OCI-LY7 (cell line): ENCODE measurements at regions of chr7 and their contacts with region 1.

Region 1: GRCh38 chr7:121366852-121367431 is 29.2 kb downstream of the FAM3C start:
- DNase-seq: peak; percentile 46
- H3K4me3 ChIP-seq: no peak overlapping the region
- H3K27ac ChIP-seq: no peak overlapping the region
- H3K4me1 ChIP-seq: peaks cover 5% of the 10 kb centered on the region
- CTCF ChIP-seq: peak; percentile 96

Region 2: DNA sequence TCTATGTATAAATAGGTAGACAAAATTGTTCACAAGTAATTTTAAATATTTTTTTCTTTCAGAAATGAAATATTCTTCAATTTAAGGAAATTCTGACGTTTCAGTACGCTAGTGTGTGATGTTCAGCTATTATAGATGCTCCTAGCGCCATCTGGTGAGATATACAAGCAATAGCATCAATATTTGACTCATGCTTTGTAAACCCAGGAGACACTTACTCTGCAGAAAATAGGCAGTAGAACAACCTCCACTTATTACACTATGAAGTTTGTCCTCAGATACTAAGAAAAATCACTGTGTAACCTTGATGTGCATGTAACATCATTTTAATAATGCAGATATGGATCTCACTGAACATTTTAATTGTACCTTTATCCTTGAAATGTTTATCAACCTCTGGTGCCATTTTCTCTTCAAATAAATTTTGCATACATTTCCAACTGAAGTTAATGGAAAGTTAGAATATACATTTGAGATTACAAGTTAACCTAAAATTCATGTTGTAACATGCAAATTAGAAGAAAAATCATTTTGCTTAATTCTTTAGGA is 180.7 kb after region 1 on chr7:
- CTCF ChIA-PET with region 1: no interaction called
- POLR2A ChIA-PET with region 1: interaction called, 3 read pairs
- intact Hi-C with region 1: loop called (anchors 1 kb)
- DNase-seq: peak; percentile 75
- H3K4me3 ChIP-seq: no peak overlapping the region
- H3K27ac ChIP-seq: no peak overlapping the region
- H3K4me1 ChIP-seq: no peaks in the 10 kb centered on the region
- CTCF ChIP-seq: peak; percentile 91

Region 3: DNA sequence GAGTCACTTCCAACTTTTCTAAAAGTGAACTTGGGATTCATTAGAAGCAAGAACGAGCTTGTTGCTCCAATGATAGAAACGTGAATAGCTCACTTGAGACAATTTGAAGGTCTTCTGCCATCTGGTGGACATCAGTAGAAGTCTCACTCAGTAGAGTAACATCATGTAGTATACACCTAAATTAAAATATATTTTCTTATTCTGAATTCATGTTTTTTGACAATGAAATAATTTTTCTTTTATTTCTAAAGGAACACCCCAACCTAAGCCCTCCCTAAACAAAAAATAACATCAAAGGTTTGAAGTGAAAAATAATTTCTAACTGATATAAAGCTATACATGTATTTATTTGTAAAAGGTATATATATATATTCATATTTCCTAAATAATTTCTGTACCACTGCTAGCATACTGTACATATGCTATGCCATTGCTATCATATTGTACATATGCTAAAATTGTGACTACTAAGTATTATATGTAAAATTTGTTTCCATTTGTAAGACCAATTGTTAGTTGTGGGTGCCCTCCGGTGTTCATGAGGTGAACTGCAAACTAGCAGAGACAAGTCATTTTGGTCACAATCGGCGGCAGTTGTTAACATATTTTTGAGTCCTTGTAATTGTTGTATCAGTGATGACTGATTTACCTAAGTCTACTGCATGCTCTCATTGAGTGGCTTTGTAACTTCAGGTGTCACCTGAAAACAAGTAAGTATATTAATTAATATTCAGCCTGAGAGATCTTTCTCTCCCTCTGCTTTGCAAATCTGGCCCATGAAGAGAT is 627.9 kb after region 1 on chr7:
- CTCF ChIA-PET with region 1: no interaction called
- POLR2A ChIA-PET with region 1: no interaction called
- intact Hi-C with region 1: loop called (anchors 10 kb)
- DNase-seq: peak; percentile 60
- H3K4me3 ChIP-seq: no peak overlapping the region
- H3K27ac ChIP-seq: no peak overlapping the region
- H3K4me1 ChIP-seq: no peaks in the 10 kb centered on the region
- CTCF ChIP-seq: peak; percentile 84